Psoas muscle (tissue), 8 donors: ENCODE measurements at regions of chr9 and their contacts with region 1.

Region 1: DNA sequence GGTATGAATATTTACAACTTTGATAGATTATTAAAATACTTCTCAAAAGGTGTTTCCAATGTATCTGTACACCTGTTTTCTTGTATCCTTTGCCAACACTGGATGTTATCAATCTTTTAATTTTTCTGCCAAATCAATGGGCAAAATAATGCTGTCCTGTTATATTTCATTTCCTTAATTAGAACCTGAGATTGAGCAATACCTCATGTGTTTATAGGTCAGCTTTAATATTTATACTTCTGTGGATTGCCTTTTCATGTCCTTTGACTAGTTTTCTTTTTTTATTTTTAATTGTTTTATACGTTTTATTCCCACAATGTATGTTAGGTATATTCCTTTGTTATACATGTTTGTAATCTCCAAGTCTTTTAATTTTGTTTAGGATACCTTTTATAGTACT is 77.6 kb downstream of the JAK2 start:
- DNase-seq: no peak
- ATAC-seq: peak in 1 of 4 donors; percentile 36
- H3K4me3 ChIP-seq: no peak overlapping the region
- H3K27ac ChIP-seq: no peak overlapping the region
- H3K4me1 ChIP-seq: no peaks in the 10 kb centered on the region
- H3K27me3 ChIP-seq: no peaks in the 10 kb centered on the region
- CTCF ChIP-seq: no peak

Region 2: DNA sequence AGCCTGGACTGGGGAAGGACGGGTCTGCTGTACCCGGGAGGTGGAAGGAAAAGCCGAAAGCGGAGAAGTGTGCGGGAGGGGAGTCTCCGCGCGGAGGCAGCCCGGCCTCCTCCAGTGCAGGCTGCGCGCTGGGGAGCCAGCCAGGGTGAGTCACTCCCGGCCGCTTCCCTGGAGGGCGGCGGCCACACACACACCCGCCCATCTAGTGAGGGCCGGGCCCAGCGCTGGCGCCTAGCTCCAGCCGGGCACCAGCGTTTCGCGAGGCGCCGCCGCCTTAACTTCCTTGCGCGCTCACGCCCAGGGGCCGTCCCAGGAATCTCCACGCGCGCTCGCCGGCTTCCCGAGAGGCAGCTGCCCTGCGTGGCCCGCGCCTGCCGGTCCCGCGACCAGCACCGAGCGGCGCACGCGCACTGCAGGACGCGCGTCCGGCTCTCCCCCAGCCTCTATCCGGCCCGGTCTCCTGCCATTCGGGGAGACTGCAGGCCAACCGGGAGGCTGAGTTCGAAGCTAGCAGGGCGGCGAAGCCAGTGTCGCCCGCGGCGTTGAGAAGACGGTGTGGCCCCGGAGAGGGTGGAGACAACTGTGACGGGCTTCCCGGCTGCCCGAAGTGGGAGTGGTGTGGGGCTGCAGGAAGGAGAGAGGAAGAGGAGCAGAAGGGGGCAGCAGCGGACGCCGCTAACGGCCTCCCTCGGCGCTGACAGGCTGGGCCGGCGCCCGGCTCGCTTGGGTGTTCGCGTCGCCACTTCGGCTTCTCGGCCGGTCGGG is 77.8 kb before region 1 on chr9 and contains the start of gene JAK2:
- intact Hi-C with region 1: no loop called
- DNase-seq: peak; percentile 91 to 95
- ATAC-seq: peak; percentile 93 to 96 (median 94)
- H3K4me3 ChIP-seq: peak within 1 kb of the TSS; percentile 95
- H3K27ac ChIP-seq: peak within 1 kb of the TSS; percentile 99
- H3K4me1 ChIP-seq: peaks cover 46% of the 10 kb centered on the region
- H3K27me3 ChIP-seq: no peaks in the 10 kb centered on the region
- CTCF ChIP-seq: peak; percentile 46
- total RNA-seq, gene JAK2: 9.0 to 32.3 (median 16.8) TPM

Region 3: DNA sequence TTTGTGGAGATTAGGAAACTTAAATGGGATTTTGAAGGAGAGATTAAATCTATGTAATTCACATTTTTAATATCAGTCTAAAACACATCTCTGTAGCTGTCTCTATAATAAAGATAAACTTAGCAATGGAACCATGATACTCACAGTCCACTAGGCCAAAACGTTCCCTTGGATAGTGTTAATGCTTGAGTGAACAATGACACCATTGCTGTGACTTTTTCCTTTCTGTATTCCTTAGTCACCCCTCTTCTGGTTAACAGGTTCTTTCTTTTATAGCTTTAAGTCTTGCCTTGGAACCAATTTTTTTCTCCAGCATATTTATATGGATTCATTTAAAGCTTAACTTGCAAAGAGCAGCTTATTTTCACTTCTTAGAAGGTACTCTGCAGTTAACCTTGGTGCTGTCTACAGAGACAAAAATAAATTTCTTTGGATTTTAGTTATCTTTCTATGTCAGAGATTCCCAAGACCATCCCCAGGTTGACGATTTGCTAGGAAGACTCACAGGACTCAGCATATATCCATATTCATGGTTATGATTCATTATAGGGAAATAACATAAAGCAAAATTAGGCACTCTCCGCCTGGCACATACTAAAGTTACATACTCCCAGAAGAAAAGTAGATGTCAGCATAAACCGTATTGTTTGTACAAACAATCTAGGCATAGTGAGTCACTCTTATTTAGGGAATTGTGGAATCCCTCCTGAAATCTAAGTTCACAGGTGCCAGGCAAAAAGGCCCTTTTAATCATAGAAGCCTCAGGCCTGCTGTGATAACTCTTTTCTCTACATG is 59.7 kb after region 1 on chr9:
- intact Hi-C with region 1: loop called in 1 of 2 experiments (anchors 10 kb)
- DNase-seq: no peak
- ATAC-seq: no peak
- H3K4me3 ChIP-seq: no peak overlapping the region
- H3K27ac ChIP-seq: no peak overlapping the region
- H3K4me1 ChIP-seq: no peaks in the 10 kb centered on the region
- H3K27me3 ChIP-seq: no peaks in the 10 kb centered on the region
- CTCF ChIP-seq: no peak